ENCODE measurements at regions of chr22 and their contacts with region 1.

Region 1: GRCh38 chr22:46346680-46347405 is 11.3 kb downstream of the TRMU start:
- DNase-seq: peak; percentile 56 to 70
- ATAC-seq: peak; percentile 70 to 86 (median 79)
- H3K4me3 ChIP-seq: no peak overlapping the region
- H3K27ac ChIP-seq: peak overlapping the region; percentile 50 to 94 (median 86)
- H3K4me1 ChIP-seq: peaks cover 0 to 50% (median 29%) of the 10 kb centered on the region in 9 donors
- H3K27me3 ChIP-seq: no peaks in the 10 kb centered on the region
- CTCF ChIP-seq: peak in 2 of 9 donors; percentile 10 to 29

Region 2: GRCh38 chr22:46476547-46476941 is 129.7 kb after region 1 on chr22:
- intact Hi-C with region 1: no loop called
- DNase-seq: no peak
- ATAC-seq: no peak
- H3K4me3 ChIP-seq: no peak overlapping the region
- H3K27ac ChIP-seq: no peak overlapping the region
- H3K4me1 ChIP-seq: no peaks in the 10 kb centered on the region
- H3K27me3 ChIP-seq: peaks cover 0 to 8% (median 0%) of the 10 kb centered on the region in 7 donors
- CTCF ChIP-seq: no peak

Region 3: DNA sequence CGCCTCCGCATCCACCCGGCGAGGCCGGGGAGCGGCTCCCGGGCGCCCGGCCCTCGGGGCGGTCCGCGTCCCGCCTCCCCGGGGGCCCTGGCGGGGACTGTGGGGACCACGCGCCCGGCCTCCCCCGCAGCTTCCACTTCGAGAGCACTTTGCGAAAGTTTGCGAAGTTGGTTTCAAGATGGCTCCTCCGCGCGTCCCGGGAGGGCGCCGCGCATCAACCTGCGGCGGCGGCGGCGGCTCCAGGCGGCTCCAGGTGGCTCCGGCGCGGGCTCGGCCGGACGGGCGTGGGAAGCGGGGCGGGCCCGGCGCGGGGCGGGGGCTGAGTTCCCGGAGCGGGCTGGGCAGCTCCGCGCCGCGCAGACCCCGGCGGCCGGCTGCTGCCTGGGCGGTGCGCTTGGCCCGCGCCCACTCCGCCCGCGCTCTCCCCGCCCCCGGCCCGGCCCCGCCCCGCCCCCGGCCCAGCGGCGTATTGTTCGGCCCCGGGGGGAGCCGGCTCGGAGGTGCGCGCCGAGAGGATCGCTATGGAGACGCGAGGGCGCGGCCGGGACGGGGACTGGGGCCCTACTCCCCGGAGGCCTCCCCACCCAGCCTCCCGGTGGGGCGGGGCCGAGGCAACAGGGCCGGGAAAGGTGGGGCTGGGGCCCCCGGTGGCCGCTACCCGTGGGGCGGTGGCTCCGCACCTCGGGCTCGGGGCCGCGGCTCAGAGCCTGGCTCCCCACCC is 190.5 kb after region 1 on chr22 and contains the start of gene CELSR1:
- intact Hi-C with region 1: no loop called
- DNase-seq: no peak
- ATAC-seq: peak; percentile 3 to 42 (median 32)
- H3K4me3 ChIP-seq: peak within 1 kb of the TSS; percentile 20 to 56 (median 52)
- H3K27ac ChIP-seq: peak within 1 kb of the TSS in 3 of 10 donors; percentile 15 to 60 (median 46)
- H3K4me1 ChIP-seq: peaks cover 0 to 24% (median 15%) of the 10 kb centered on the region in 9 donors
- H3K27me3 ChIP-seq: peaks cover 0 to 56% (median 42%) of the 10 kb centered on the region in 7 donors
- CTCF ChIP-seq: no peak
- total RNA-seq, gene CELSR1: 5.5 to 16.7 (median 11.8) TPM

Region 4: GRCh38 chr22:46547883-46548244 is 201.0 kb after region 1 on chr22:
- intact Hi-C with region 1: loop called in 1 of 10 experiments (anchors 5 kb)
- DNase-seq: peak; percentile 69 to 79
- ATAC-seq: peak; percentile 35 to 75 (median 66)
- H3K4me3 ChIP-seq: peak overlapping the region in 7 of 10 donors; percentile 3 to 32 (median 15)
- H3K27ac ChIP-seq: peak overlapping the region; percentile 65 to 99 (median 92)
- H3K4me1 ChIP-seq: peaks cover 6 to 59% (median 27%) of the 10 kb centered on the region in 9 donors
- H3K27me3 ChIP-seq: no peaks in the 10 kb centered on the region
- CTCF ChIP-seq: no peak

Measured in heart right ventricle (tissue), 16 donors.